ENCODE measurements at regions of chr1 and their contacts with region 1.

Region 1: GRCh38 chr1:21573971-21574465 is 64.8 kb downstream of the ALPL start:
- DNase-seq: peak; percentile 92
- ATAC-seq: peak; percentile 92

Region 2: DNA sequence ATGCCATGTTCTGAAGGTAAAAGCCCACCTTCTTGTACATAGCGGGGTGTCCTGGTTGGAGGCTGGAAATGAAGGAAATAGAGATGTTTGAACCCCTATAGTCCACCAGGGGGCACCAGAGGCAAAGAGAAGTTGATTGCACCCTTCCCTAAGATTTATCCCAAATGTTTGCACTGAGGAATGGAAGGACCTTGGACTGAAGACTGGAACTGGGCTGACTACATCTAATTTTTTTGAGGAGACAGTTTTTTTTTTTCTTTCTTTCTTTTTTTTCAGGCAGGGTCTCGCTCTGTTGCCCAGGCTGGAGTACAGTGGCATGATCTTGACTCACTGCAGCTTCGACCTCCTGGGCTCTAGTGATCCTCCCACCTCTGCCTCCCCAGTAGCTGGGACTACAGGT is 342.0 kb before region 1 on chr1:
- intact Hi-C with region 1: loop called (anchors 10 kb)
- DNase-seq: no peak
- ATAC-seq: peak; percentile 59

Region 3: GRCh38 chr1:21368515-21369289 is 205.3 kb before region 1 on chr1:
- intact Hi-C with region 1: loop called (anchors 2 kb)
- DNase-seq: peak; percentile 87
- ATAC-seq: peak; percentile 95

Region 4: DNA sequence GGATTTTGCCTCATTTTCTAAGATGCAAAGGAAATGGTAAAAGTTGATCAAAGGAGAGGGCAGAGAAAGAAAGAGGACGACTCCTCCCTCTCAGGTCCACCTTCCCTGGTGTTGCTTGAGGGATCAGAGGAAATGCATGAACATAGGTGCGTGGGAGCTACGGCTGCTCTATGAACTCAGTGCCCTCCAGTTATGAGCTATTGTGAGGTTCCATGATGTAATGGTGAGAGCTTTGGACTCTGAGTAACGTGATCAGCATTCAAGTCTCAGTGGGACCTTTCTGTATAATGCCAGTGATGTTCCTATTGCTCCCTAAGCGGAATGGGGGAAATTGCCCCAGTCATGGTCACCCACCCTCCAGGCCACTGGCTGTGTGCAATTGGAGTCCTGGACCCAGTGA is 160.0 kb before region 1 on chr1:
- intact Hi-C with region 1: no loop called
- DNase-seq: no peak
- ATAC-seq: no peak

Region 5: DNA sequence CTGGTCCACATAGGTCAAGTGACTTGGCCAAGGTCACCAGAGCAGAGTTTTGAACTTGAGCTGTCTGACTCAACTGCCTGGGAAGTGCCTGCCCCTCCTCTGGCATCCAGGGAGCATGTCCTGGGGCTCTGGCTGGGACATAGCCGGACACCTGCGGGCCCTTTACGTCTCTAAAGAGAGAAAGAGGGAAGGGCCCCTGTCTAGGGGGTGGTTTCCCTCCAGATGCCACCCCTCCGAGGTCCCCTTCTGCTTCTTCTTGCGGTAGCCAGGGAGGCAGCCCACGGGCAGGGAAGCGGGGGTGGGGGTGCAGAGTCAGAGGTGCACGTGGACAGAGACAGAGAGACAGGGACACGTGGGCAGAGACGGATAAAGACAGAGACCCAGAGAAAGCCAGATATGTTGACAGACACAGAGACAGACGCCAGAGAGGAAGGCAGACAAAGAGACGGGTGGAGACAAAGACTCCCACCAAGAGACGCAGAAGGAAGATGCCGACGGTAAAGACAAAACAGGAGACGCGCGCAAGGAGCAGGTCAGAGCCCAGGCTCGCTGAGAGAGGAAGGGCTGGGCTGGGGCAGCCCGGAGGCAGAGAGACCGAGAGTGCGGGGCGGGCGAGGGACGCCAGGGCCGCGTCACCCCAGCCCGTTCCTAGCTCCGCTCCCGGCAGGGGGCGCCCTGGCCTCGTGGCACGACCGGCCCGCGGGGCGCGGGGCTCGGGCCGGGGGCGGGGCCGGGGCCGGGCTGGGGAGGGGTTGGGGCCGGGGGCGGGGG is 65.3 kb before region 1 on chr1:
- intact Hi-C with region 1: loop called (anchors 1 kb)
- DNase-seq: peak; percentile 90
- ATAC-seq: peak; percentile 81

Region 6: GRCh38 chr1:21539933-21540332 is 34.1 kb before region 1 on chr1:
- intact Hi-C with region 1: loop called (anchors 2 kb)
- DNase-seq: peak; percentile 73
- ATAC-seq: peak; percentile 35

Region 7: DNA sequence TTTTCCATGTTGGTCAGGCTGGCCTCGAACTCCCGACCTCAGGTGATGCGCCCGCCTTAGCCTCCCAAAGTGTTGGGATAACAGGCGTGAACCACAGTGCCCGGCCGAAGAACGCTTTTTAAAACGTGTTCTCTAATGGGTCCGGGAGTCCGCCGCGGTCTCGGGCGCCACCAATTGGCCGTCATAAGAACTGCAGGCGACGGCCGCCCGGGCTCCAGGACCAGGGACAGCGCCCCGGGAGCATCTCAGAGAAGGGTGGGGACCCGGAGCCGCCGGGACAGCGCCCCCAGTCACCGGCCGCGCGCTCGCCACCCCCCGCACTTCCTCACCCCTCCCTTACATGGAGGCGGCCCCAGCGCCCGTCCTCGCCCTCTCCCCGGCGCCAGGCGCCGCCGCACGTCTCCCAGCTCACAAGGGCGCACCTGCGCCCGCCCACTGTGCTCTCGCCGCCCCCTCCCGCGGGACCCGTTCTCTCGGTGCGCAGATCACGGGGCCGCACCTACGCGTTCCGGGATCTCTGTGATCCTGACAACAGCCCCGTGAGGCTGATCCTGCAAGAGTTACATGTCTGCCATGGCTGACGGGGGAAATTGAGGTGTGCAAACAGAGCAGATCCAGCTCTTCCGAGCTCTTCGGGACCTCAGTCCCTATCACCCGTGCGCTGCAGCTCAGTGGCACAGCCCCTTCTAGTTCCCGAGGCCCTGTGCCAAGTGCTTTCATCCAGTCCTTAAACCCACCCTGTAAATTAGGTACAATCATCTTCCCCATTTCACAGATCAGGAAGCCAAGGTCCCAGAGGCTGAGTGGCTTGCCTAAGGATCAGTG is 85.3 kb after region 1 on chr1:
- intact Hi-C with region 1: loop called (anchors 1 kb)
- DNase-seq: peak; percentile 94
- ATAC-seq: peak; percentile 73

Measured in Right ventricle myocardium inferior (tissue), 1 donor.